ENCODE measurements at regions of chr15 and their contacts with region 1.

Region 1: DNA sequence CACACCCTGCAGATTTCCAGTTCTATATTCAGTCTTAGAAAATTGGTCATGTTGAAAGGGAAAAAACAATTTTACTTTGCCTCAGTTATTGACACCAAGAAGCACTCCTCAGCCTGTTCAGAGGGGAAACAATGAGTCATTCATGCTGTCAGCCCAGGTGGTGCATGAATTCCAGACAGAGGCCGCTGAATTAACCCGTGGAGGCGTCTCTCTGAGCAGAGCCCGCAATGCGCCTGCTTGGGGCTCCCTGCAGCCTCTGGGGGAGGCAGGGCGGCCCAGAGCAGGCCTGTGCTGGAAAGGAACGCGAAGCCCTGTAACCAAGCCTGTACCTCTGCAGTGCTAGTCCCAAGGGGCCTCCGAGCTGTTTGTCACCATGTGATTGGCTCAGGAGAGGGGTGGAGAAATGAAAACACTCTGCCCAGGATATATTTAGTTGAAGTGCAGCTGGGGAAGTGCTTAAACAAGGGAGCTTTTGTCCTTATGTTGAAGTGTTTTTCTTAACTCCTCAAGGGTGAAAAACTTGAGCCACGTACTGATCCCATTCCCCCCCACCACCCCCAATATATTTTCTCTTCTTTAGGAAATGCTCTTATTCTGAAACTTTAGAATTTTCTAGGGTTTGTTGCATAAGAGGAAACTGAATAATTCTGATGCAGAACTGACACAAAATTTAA is 68.3 kb upstream of the CHD2 start:
- DNase-seq: peak; percentile 85
- H3K4me3 ChIP-seq: peak overlapping the region; percentile 7 to 40; a peak in 2 of 4 replicates
- H3K27ac ChIP-seq: peak overlapping the region; percentile 88 to 94
- H3K4me1 ChIP-seq: peaks cover 16 to 26% of the 10 kb centered on the region in 2 experiments
- H3K27me3 ChIP-seq: no peaks in the 10 kb centered on the region
- CTCF ChIP-seq: no peak
- EP300 ChIP-seq: peak in 1 of 2 experiments; percentile 66; a peak in 2 of 4 replicates
- RAD21 ChIP-seq: peak; percentile 33; the same call in 1 of the 2 replicates

Region 2: DNA sequence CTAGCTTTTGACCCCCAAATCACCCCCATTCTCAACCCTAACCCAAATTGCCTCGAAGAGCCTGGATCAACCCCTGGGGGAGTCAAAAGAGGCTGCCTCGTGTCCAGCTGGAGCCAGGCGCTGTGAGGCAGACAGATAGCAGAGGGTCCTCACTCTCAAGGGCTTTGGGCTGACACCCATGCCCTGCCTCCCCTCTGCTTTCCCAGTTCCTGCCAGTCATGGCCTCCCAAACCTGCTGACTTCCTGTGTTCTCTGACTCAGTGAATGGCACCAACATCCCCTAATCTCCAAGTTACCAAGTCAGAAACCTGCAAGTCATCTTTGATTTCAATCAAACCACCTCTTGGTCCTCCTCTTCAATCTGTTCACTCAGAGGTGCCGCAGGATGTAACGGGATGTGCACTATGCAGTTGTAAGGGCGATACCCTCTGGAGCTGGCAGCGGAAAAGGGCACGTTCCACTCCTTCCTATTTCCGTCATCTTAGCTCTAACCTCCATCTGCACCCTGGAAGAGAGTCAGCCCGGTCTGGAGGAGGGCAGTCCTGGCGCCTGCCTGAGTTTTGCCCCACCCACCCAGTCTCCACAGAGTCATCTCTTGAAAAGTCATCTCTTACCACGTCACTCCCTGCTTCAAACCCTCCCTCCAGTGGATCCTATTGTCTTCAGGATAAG is 123.8 kb before region 1 on chr15:
- CTCF ChIA-PET with region 1: no interaction called
- POLR2A ChIA-PET with region 1: no interaction called
- DNase-seq: no peak
- H3K4me3 ChIP-seq: no peak overlapping the region
- H3K27ac ChIP-seq: no peak overlapping the region
- H3K4me1 ChIP-seq: peaks cover 0 to 2% of the 10 kb centered on the region in 2 experiments; a peak in 1 of 4 replicates
- H3K27me3 ChIP-seq: no peaks in the 10 kb centered on the region
- CTCF ChIP-seq: no peak
- EP300 ChIP-seq: no peak
- RAD21 ChIP-seq: no peak

Region 3: GRCh38 chr15:92820236-92821021 is 11.4 kb before region 1 on chr15:
- CTCF ChIA-PET with region 1: interaction called, 10 read pairs
- POLR2A ChIA-PET with region 1: interaction called, 11 read pairs
- DNase-seq: peak; percentile 96
- H3K4me3 ChIP-seq: peak overlapping the region; percentile 38 to 58
- H3K27ac ChIP-seq: peak overlapping the region; percentile 78 to 98
- H3K4me1 ChIP-seq: peaks cover 21 to 40% of the 10 kb centered on the region in 2 experiments
- H3K27me3 ChIP-seq: no peaks in the 10 kb centered on the region
- CTCF ChIP-seq: no peak
- EP300 ChIP-seq: peak; percentile 32 to 35; a peak in 2 of 4 replicates
- RAD21 ChIP-seq: peak; percentile 24

Region 4: DNA sequence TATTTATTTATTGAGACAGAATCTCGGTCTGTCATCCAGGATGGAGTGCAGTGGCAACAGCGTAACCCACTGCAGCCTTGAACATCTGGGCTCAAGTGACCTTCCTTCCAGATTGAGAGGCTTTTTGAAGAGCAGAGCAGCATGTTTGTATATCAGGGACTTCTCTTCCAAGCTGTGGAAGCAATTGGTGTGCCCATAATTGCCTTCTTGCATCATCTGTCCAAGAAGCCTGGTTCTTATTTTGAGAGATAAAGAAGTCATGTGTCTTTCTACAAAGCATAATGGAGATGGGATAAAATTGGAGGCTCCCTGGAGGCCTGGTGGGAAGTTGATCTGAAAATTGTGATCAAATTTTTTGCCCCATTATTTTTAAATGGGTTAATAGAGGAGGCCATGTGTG is 1215.8 kb after region 1 on chr15:
- CTCF ChIA-PET with region 1: no interaction called
- POLR2A ChIA-PET with region 1: no interaction called
- DNase-seq: no peak
- H3K4me3 ChIP-seq: no peak overlapping the region
- H3K27ac ChIP-seq: no peak overlapping the region
- H3K4me1 ChIP-seq: no peaks in the 10 kb centered on the region
- H3K27me3 ChIP-seq: no peaks in the 10 kb centered on the region
- CTCF ChIP-seq: no peak
- EP300 ChIP-seq: no peak
- RAD21 ChIP-seq: no peak